GM12878 (cell line): ENCODE measurements at regions of chr5 and their contacts with region 1.

Region 1: DNA sequence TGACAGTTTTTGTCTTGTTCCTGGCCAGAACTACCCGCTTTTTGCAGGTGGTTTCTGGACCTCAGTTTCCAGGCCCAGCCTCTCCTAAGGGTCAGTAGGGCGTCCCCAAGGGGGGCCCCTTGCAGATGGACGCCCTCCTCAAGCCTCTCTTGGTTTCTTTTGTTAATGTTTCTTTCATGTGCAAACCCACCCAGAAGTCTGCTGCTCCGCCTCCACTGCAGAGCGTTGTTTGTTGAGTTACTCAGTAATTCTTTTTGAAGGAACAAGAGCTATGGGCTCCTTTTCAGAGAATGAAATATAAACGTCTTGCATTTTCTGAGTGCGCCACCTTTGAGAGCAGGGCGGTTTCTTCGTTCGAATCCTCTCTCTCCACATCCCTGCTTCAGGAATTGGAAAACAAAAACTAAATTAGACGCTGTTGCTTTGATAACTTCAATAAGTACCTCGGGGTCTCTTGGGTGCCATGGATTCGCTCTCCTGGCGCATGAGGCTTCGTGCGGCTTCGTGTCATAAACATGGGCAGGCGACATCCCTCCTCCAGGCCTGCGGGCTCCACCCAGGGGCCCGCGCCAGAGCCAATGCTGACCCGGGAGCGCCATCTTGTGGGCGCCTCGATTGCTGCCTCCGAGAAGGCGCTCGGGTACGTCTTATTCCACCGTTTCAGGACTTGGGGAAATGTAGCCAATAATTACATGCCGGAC is 38.3 kb upstream of the CKMT2 start:
- DNase-seq: no peak
- ATAC-seq: peak; percentile 100
- H3K4me3 ChIP-seq: no peak overlapping the region
- H3K27ac ChIP-seq: no peak overlapping the region
- H3K4me1 ChIP-seq: no peaks in the 10 kb centered on the region
- H3K27me3 ChIP-seq: no peaks in the 10 kb centered on the region; a peak in 1 of 4 replicates
- CTCF ChIP-seq: peak; percentile 94 to 97 (median 95)
- EP300 ChIP-seq: no peak
- POLR2A ChIP-seq: no peak
- RAD21 ChIP-seq: peak; percentile 96

Region 2: GRCh38 chr5:80346055-80346454 is 848.7 kb before region 1 on chr5:
- CTCF ChIA-PET with region 1: interaction called, 3 read pairs
- POLR2A ChIA-PET with region 1: no interaction called
- RAD21 ChIA-PET with region 1: no interaction called
- SMC1A ChIA-PET with region 1: no interaction called
- in situ Hi-C with region 1: no loop called
- intact Hi-C with region 1: loop called (anchors 2 kb)
- DNase-seq: no peak
- ATAC-seq: peak; percentile 81
- H3K4me3 ChIP-seq: no peak overlapping the region
- H3K27ac ChIP-seq: no peak overlapping the region
- H3K4me1 ChIP-seq: no peaks in the 10 kb centered on the region
- H3K27me3 ChIP-seq: no peaks in the 10 kb centered on the region
- CTCF ChIP-seq: peak; percentile 49 to 59 (median 58); a peak in 5 of 6 replicates
- EP300 ChIP-seq: no peak
- POLR2A ChIP-seq: no peak
- RAD21 ChIP-seq: peak; percentile 59

Region 3: GRCh38 chr5:80481019-80481893 is 713.5 kb before region 1 on chr5:
- CTCF ChIA-PET with region 1: interaction called, 22 read pairs
- POLR2A ChIA-PET with region 1: no interaction called
- RAD21 ChIA-PET with region 1: no interaction called
- SMC1A ChIA-PET with region 1: interaction called, 3 read pairs
- in situ Hi-C with region 1: no loop called
- intact Hi-C with region 1: loop called (anchors 5 kb)
- DNase-seq: peak; percentile 27
- ATAC-seq: peak; percentile 100
- H3K4me3 ChIP-seq: no peak overlapping the region
- H3K27ac ChIP-seq: no peak overlapping the region
- H3K4me1 ChIP-seq: no peaks in the 10 kb centered on the region
- H3K27me3 ChIP-seq: no peaks in the 10 kb centered on the region
- CTCF ChIP-seq: peak; percentile 69 to 86 (median 85)
- EP300 ChIP-seq: no peak
- POLR2A ChIP-seq: no peak
- RAD21 ChIP-seq: peak; percentile 61

Region 4: DNA sequence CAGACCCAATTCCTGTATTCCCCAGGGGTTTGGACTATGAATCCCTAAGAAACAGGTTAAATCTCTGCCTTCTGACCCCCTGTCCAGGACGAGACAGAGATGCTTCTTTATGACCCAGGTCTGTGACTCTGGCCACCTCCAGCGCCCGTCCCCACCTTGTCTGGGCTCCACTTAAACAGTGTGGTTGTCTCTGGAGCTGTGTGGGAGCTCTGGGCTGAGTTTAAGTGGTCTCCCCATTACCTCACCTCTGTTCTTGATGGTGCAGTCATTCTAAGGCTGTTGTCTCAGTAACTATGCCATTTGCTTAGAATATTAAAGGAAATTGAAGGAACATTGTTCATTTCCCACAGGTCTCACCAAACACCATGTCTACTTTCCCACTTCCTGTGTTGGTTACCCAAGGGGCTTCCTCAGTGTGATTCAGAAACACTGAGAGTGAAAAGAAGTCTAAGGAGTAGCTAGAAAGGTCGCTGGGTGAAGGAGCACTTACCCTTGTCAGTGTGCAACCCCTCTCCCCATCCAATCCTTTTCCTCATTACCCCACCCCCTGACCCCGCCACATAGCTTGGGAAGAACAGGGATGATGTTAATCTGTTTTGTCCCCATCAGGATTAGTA is 89.4 kb before region 1 on chr5:
- CTCF ChIA-PET with region 1: interaction called, 25 read pairs
- POLR2A ChIA-PET with region 1: no interaction called
- RAD21 ChIA-PET with region 1: interaction called, 4 read pairs
- SMC1A ChIA-PET with region 1: interaction called, 5 read pairs
- in situ Hi-C with region 1: no loop called
- intact Hi-C with region 1: no loop called
- DNase-seq: no peak
- ATAC-seq: no peak; the same call in 2 of the 3 replicates
- H3K4me3 ChIP-seq: no peak overlapping the region
- H3K27ac ChIP-seq: no peak overlapping the region
- H3K4me1 ChIP-seq: no peaks in the 10 kb centered on the region
- H3K27me3 ChIP-seq: no peaks in the 10 kb centered on the region
- CTCF ChIP-seq: no peak
- EP300 ChIP-seq: no peak
- POLR2A ChIP-seq: no peak
- RAD21 ChIP-seq: no peak

Region 5: GRCh38 chr5:81183811-81184748 is 10.7 kb before region 1 on chr5:
- CTCF ChIA-PET with region 1: interaction called, 22 read pairs
- POLR2A ChIA-PET with region 1: interaction called, 4 read pairs
- RAD21 ChIA-PET with region 1: interaction called, 9 read pairs
- SMC1A ChIA-PET with region 1: interaction called, 23 read pairs
- in situ Hi-C with region 1: no loop called
- intact Hi-C with region 1: no loop called
- DNase-seq: no peak
- ATAC-seq: no peak
- H3K4me3 ChIP-seq: no peak overlapping the region
- H3K27ac ChIP-seq: no peak overlapping the region
- H3K4me1 ChIP-seq: peaks cover 33% of the 10 kb centered on the region
- H3K27me3 ChIP-seq: no peaks in the 10 kb centered on the region
- CTCF ChIP-seq: no peak
- EP300 ChIP-seq: no peak
- POLR2A ChIP-seq: no peak
- RAD21 ChIP-seq: no peak

Region 6: GRCh38 chr5:81207009-81207408 is 12.2 kb after region 1 on chr5:
- CTCF ChIA-PET with region 1: interaction called, 14 read pairs
- POLR2A ChIA-PET with region 1: no interaction called
- RAD21 ChIA-PET with region 1: interaction called, 4 read pairs
- SMC1A ChIA-PET with region 1: interaction called, 4 read pairs
- in situ Hi-C with region 1: no loop called
- intact Hi-C with region 1: no loop called
- DNase-seq: no peak
- ATAC-seq: peak; percentile 53
- H3K4me3 ChIP-seq: no peak overlapping the region
- H3K27ac ChIP-seq: no peak overlapping the region
- H3K4me1 ChIP-seq: no peaks in the 10 kb centered on the region
- H3K27me3 ChIP-seq: no peaks in the 10 kb centered on the region
- CTCF ChIP-seq: peak; percentile 31 to 44 (median 38)
- EP300 ChIP-seq: no peak
- POLR2A ChIP-seq: no peak
- RAD21 ChIP-seq: peak; percentile 13; the same call in 1 of the 2 replicates